Ascending aorta (tissue), 2 donors: ENCODE measurements at regions of chr2 and their contacts with region 1.

Region 1: GRCh38 chr2:196291873-196292800 is 120.8 kb upstream of the STK17B start:
- DNase-seq: no peak
- H3K4me3 ChIP-seq: no peak overlapping the region
- H3K27ac ChIP-seq: no peak overlapping the region
- H3K4me1 ChIP-seq: peaks cover 0 to 3% of the 10 kb centered on the region in 2 donors
- H3K27me3 ChIP-seq: no peaks in the 10 kb centered on the region
- CTCF ChIP-seq: no peak

Region 2: GRCh38 chr2:196263181-196263747 is 28.9 kb before region 1 on chr2:
- intact Hi-C with region 1: no loop called
- DNase-seq: no peak
- H3K4me3 ChIP-seq: no peak overlapping the region
- H3K27ac ChIP-seq: no peak overlapping the region
- H3K4me1 ChIP-seq: peaks cover 0 to 4% of the 10 kb centered on the region in 2 donors
- H3K27me3 ChIP-seq: no peaks in the 10 kb centered on the region
- CTCF ChIP-seq: no peak

Region 3: DNA sequence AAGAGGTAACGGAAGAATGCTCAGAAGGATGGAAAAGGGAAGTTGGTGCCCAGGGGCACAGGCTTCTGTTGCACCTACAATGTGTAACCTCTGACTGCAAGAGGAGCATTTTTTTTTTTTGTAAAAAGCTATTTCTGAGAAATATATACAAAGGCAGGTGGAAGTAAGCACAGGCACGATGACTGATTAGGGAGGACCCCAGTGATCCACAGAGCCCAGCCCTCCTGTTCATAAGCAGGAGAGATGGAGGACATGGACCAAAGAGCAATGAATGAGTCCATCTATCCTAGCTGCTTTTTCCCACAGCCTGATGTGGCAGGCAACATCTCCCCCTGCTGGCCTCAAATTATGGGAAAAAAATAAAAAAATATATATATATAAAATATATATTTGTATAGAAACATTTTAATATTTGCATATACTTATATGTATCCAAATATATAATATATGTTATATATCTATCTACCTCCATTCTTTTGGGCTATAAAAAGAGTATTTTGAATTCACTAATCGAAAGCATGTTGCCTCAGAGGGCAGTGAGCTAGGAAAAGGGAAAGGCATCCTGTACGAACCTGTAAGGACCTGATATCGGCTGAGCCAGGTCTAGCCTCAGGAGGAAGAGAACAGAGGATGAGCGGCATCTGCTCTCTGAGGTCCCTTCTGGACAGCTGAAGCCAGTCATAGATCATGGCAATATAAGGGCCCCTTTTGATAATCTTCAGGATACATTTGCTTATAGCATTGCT is 45.2 kb after region 1 on chr2:
- intact Hi-C with region 1: loop called (anchors 1 kb)
- DNase-seq: no peak
- H3K4me3 ChIP-seq: no peak overlapping the region
- H3K27ac ChIP-seq: no peak overlapping the region
- H3K4me1 ChIP-seq: peaks cover 0 to 3% of the 10 kb centered on the region in 2 donors
- H3K27me3 ChIP-seq: no peaks in the 10 kb centered on the region
- CTCF ChIP-seq: peak in 2 of 3 experiments; percentile 32 to 48

Region 4: GRCh38 chr2:196453613-196454047 is 161.5 kb after region 1 on chr2:
- intact Hi-C with region 1: loop called (anchors 5 kb)
- DNase-seq: no peak
- H3K4me3 ChIP-seq: no peak overlapping the region
- H3K27ac ChIP-seq: no peak overlapping the region
- H3K4me1 ChIP-seq: no peaks in the 10 kb centered on the region
- H3K27me3 ChIP-seq: no peaks in the 10 kb centered on the region
- CTCF ChIP-seq: peak in 2 of 3 experiments; percentile 35 to 63

Region 5: GRCh38 chr2:196758474-196759377 is 466.6 kb after region 1 on chr2:
- intact Hi-C with region 1: loop called (anchors 5 kb)
- DNase-seq: no peak
- H3K4me3 ChIP-seq: peak overlapping the region in 1 of 2 donors; percentile 29
- H3K27ac ChIP-seq: no peak overlapping the region
- H3K4me1 ChIP-seq: peaks cover 0 to 7% of the 10 kb centered on the region in 2 donors
- H3K27me3 ChIP-seq: no peaks in the 10 kb centered on the region
- CTCF ChIP-seq: peak; percentile 28 to 45 (median 30)